ENCODE measurements at regions of chr17 and their contacts with region 1.

Region 1: DNA sequence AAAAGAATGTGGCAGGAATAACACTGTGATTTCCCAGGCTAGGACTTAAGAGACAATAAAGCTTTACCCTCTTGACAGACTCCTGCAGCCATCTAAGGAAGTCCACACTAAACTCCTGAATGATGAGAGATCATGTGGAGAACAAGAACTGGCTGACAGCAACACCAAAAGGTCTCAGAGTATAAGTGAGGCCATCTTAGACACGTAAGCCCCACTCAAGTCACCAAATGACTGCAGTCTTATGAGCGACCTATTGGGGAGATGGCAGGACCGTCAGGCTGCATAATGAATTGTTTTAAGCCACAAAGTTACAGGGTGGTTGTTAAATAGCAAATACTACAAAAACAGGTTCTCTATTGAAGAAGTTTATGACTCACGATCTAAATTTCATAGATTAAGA is 36.8 kb downstream of the FBXL20 start:
- DNase-seq: no peak
- ATAC-seq: no peak
- H3K4me3 ChIP-seq: no peak overlapping the region
- H3K27ac ChIP-seq: no peak overlapping the region
- H3K4me1 ChIP-seq: no peaks in the 10 kb centered on the region
- H3K27me3 ChIP-seq: no peaks in the 10 kb centered on the region
- CTCF ChIP-seq: no peak
- EP300 ChIP-seq: no peak
- POLR2A ChIP-seq: no peak
- RAD21 ChIP-seq: no peak

Region 2: GRCh38 chr17:39304188-39304587 is 60.4 kb before region 1 on chr17:
- CTCF ChIA-PET with region 1: no interaction called
- POLR2A ChIA-PET with region 1: no interaction called
- in situ Hi-C with region 1: no loop called
- intact Hi-C with region 1: loop called (anchors 5 kb)
- DNase-seq: no peak
- ATAC-seq: peak; percentile 59
- H3K4me3 ChIP-seq: no peak overlapping the region
- H3K27ac ChIP-seq: no peak overlapping the region
- H3K4me1 ChIP-seq: peaks cover 12% of the 10 kb centered on the region
- H3K27me3 ChIP-seq: no peaks in the 10 kb centered on the region
- CTCF ChIP-seq: no peak
- EP300 ChIP-seq: no peak
- POLR2A ChIP-seq: no peak
- RAD21 ChIP-seq: no peak

Measured in HepG2 (cell line).